Prostate gland (tissue), 2 donors: ENCODE measurements at regions of chr10 and their contacts with region 1.

Region 1: GRCh38 chr10:91758303-91759146 is 39.7 kb upstream of the TNKS2 start:
- DNase-seq: no peak
- H3K4me3 ChIP-seq: no peak overlapping the region
- H3K27ac ChIP-seq: no peak overlapping the region
- H3K4me1 ChIP-seq: no peaks in the 10 kb centered on the region
- H3K27me3 ChIP-seq: no peaks in the 10 kb centered on the region
- CTCF ChIP-seq: peak in 3 of 4 experiments; percentile 49 to 65 (median 63)
- POLR2A ChIP-seq: no peak

Region 2: DNA sequence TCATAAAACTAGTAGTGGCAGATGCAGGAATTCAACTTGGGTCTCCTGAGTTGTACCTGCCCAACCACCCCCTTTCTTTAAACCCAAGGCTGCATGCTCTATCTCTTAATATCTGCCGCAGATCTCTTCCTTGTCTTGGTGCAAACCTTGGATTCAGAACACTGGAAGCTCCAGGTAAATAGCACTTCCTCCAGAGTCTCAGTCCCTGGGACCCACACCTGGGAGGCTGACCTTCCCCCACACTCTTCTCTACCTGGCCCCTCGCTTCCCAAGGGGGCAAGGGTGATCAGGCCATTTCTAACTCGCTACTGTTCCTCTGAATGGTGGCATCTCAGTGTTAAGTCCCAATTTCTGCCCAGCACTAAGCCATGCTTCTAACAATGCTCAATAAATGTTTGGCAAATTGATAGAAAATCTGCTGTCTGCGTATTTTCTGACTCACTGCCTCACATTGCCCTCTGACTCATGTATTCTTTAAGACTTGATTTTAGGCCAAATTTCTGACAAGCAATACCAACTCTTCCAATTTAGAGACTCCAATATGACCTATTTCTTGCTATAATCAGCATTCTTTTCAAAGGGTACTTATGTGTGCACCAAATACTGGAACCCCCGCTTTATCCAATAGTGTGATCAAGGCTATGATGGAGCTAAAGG is 57.6 kb before region 1 on chr10:
- intact Hi-C with region 1: no loop called
- DNase-seq: no peak
- H3K4me3 ChIP-seq: no peak overlapping the region
- H3K27ac ChIP-seq: no peak overlapping the region
- H3K4me1 ChIP-seq: no peaks in the 10 kb centered on the region
- H3K27me3 ChIP-seq: no peaks in the 10 kb centered on the region
- CTCF ChIP-seq: no peak
- POLR2A ChIP-seq: no peak

Region 3: DNA sequence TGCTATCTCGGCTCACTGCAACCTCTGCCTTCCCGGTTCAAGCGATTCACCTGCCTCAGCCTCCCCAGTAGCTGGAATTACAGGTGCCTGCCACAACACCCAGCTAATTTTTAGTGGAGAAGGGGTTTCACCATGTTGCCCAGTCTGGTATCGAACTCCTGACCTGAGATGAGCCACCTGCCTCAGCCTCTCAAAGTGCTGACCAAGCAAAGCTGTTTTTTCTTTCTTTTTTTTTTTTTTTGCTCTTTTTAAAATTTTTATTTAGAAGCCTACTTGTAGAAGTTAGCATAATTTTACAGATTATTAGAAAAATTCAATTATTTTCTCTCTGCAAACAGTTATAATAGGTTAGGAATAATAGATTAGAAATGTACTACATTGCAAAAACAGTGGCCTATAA is 151.9 kb after region 1 on chr10:
- intact Hi-C with region 1: loop called (anchors 5 kb)
- DNase-seq: no peak
- H3K4me3 ChIP-seq: no peak overlapping the region
- H3K27ac ChIP-seq: no peak overlapping the region
- H3K4me1 ChIP-seq: no peaks in the 10 kb centered on the region
- H3K27me3 ChIP-seq: no peaks in the 10 kb centered on the region
- CTCF ChIP-seq: no peak
- POLR2A ChIP-seq: no peak

Region 4: GRCh38 chr10:92052088-92052487 is 293.6 kb after region 1 on chr10:
- intact Hi-C with region 1: no loop called
- DNase-seq: peak; percentile 24
- H3K4me3 ChIP-seq: no peak overlapping the region
- H3K27ac ChIP-seq: no peak overlapping the region
- H3K4me1 ChIP-seq: no peaks in the 10 kb centered on the region
- H3K27me3 ChIP-seq: no peaks in the 10 kb centered on the region
- CTCF ChIP-seq: no peak
- POLR2A ChIP-seq: no peak